Vagina (tissue), 2 donors: ENCODE measurements at regions of chr10 and their contacts with region 1.

Region 1: DNA sequence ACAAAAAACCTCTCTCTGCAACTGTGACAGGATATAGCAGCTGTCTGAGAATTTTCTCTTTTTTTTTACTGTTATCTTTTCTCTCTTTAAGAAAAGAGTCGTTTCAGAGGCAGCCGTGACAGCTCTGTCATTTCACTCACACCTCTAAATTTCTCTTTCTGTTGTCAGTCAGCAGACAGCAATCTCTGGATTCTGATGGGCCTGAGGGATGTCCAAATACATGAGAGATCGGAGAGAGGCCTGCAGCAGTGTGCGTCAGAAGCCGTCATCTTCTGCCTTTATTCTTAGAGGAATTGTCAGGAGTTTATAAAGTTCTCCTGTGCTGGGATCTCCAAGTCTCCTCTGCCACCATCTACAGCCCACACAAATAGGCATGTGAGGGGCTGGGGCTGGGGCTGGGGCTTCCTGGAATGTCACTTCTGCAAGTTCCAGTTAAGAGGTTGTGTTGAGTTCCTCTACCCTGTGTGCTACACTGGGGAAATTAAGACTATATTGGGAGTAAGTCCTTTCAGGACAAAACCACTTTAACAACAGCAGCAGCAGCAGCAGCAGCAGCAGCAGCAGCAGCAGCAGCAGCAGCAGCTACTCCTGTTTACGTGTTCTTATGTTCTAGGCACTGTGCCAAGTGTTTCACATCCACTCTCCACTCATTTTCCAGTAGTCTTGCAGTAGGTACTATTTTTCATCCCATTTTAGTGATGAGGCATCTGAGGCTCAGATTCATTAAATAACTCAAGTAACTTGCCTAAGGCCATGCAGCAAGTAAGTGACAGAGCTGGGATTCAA is 541.3 kb downstream of the LRMDA start:
- DNase-seq: no peak
- H3K4me3 ChIP-seq: no peak overlapping the region
- H3K27ac ChIP-seq: peak overlapping the region; percentile 34
- H3K4me1 ChIP-seq: peaks cover 15% of the 10 kb centered on the region
- H3K27me3 ChIP-seq: no peaks in the 10 kb centered on the region
- CTCF ChIP-seq: no peak
- POLR2A ChIP-seq: no peak

Region 2: DNA sequence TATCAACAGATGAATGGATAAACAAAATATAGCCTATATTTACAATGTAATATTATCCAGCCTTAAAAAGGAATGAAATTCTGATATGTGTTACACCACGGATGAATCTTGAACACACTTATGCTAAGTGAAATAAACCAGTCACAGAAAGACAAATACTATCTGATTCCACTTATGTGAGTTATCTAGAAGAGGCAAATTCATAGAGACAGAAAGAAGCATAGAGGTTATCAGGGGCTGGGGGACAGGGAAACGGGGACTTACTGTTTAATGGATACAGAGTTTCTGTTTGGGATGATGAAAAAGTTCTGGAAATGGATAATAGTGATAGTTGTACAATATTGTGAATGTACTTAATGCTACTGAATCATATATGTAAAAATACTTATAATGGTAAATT is 211.4 kb before region 1 on chr10:
- intact Hi-C with region 1: no loop called
- DNase-seq: no peak
- H3K4me3 ChIP-seq: no peak overlapping the region
- H3K27ac ChIP-seq: no peak overlapping the region
- H3K4me1 ChIP-seq: no peaks in the 10 kb centered on the region
- H3K27me3 ChIP-seq: no peaks in the 10 kb centered on the region
- CTCF ChIP-seq: no peak
- POLR2A ChIP-seq: no peak

Region 3: DNA sequence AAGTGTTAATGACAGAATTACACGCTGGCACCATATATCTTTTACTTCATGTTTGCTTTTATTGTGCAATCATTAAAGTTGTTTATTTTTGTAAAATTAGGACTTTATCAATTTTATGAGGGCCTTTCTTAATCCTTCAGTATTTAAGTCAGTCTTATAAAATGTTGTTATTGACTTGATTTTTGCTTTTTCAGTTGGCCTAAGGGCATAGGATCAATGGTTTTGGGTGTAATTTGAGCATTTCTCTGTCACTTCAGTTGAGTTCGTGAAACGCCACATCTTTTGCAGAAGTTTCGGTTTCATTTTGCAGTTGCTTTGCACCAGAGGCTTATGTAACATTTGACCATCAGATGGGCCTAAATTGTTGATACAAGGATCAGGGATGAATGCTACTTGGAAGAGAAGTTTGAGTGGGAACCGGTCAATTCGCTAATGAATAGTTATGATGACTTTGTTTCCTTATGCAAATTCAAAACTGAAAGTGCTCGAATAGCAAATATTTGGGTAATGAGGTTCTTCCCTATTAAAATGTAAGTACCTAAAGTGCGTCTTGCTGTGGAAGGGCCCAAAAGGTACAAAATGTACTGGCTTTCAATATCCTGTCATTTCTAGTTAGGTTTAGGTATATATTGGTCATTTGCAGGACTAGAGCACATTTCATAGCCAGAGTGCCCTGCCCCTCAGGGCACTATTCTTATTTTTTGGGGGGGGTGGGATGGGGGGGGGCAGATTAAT is 200.4 kb before region 1 on chr10:
- intact Hi-C with region 1: loop called (anchors 5 kb)
- DNase-seq: no peak
- H3K4me3 ChIP-seq: peak overlapping the region; percentile 20 to 28
- H3K27ac ChIP-seq: peak overlapping the region; percentile 62
- H3K4me1 ChIP-seq: peaks cover 35% of the 10 kb centered on the region
- H3K27me3 ChIP-seq: no peaks in the 10 kb centered on the region
- CTCF ChIP-seq: no peak
- POLR2A ChIP-seq: no peak

Region 4: DNA sequence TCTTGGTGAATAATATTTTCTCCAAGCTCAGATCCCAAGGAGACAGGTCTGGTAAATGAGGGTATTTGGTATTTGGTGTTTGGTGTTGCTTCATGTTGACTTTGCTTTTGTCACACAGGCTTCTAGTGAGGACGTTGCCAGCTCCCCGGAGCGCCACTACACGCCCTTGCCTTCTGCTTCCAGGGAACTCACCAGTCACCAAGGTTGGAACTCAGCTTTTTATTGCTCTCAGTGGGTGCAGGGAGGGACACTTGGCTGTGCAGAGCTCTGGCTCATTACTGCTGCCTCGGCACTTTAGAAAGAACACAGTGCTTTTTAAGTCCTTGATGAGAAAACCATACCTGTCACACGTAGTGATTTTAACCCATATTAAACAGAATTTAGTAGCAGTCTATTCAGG is 351.6 kb after region 1 on chr10:
- intact Hi-C with region 1: no loop called
- DNase-seq: no peak
- H3K4me3 ChIP-seq: no peak overlapping the region
- H3K27ac ChIP-seq: no peak overlapping the region
- H3K4me1 ChIP-seq: peaks cover 6% of the 10 kb centered on the region
- H3K27me3 ChIP-seq: no peaks in the 10 kb centered on the region
- CTCF ChIP-seq: no peak
- POLR2A ChIP-seq: no peak

Region 5: DNA sequence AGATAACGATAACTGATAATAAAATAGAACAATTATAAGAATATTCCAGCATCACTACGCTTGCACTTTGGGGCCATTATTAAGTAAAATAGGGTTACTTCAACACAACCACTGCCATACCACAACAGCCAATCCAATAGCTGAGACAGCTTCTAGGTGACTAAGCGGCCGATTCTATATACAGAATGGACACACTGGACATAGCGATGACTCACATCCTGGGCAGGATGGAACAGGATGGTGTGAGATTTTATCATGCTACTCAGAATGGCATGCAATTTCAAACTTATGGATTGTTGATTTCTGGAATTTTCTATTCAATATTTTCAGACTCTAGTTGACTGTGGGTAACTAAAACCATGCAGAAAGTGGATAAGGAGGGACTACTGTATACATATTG is 379.6 kb after region 1 on chr10:
- intact Hi-C with region 1: no loop called
- DNase-seq: no peak
- H3K4me3 ChIP-seq: no peak overlapping the region
- H3K27ac ChIP-seq: no peak overlapping the region
- H3K4me1 ChIP-seq: no peaks in the 10 kb centered on the region
- H3K27me3 ChIP-seq: no peaks in the 10 kb centered on the region
- CTCF ChIP-seq: no peak
- POLR2A ChIP-seq: no peak